ENCODE measurements at regions of chr2 and their contacts with region 1.

Region 1: GRCh38 chr2:219521066-219521880 is 7.0 kb downstream of the ASIC4 start:
- DNase-seq: no peak
- ATAC-seq: peak; percentile 35

Region 2: DNA sequence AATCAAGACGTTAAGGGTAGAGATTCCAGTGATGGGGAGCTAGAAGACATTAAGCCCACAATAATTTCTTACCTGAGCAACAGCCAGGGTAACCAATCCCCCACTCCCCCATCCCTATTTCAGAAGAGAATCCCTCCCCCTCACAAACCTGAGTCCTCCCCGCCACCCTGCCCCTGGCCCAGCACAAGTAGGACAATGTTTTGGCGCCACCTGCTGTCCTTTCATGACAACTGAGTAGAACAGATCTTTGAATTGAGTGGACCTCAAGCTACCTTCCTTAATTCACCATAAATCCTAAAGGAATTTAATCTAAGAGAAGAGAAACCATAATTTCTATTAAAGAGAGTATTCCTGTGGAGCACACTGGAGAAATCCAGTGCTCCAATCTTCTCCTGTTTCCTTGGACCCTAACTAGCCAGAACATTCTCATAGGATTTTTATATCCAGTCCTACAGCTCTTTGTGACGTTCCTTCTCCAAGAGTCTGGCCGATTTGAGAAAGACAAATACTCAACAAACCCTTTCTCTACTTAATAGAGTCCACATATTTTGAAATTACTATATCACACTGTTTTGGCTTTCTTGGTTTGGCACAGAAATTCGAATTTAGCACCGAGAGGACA is 401.7 kb before region 1 on chr2:
- intact Hi-C with region 1: no loop called
- DNase-seq: peak; percentile 74 to 88
- ATAC-seq: peak; percentile 16

Region 3: DNA sequence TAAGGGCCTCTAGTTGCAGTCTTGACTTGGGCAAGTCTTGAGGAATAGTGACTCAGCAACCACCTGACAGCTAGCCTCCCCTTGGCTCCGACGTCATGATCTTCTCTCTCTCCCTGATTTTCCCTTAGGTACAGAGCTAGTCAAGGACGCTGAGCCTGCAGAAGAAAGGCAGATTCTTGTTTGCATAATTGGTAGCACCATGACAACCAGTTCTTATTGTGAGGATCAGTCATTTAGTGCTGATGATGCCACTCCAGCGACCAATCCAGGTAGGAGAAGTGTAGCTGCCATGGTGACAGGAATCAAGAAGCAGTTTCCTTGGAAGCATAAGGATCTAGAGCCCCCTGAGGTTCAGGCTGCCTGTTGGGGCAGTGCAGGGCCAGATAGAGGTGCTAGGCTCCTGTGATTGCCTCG is 185.9 kb before region 1 on chr2:
- intact Hi-C with region 1: no loop called
- DNase-seq: no peak
- ATAC-seq: no peak

Region 4: DNA sequence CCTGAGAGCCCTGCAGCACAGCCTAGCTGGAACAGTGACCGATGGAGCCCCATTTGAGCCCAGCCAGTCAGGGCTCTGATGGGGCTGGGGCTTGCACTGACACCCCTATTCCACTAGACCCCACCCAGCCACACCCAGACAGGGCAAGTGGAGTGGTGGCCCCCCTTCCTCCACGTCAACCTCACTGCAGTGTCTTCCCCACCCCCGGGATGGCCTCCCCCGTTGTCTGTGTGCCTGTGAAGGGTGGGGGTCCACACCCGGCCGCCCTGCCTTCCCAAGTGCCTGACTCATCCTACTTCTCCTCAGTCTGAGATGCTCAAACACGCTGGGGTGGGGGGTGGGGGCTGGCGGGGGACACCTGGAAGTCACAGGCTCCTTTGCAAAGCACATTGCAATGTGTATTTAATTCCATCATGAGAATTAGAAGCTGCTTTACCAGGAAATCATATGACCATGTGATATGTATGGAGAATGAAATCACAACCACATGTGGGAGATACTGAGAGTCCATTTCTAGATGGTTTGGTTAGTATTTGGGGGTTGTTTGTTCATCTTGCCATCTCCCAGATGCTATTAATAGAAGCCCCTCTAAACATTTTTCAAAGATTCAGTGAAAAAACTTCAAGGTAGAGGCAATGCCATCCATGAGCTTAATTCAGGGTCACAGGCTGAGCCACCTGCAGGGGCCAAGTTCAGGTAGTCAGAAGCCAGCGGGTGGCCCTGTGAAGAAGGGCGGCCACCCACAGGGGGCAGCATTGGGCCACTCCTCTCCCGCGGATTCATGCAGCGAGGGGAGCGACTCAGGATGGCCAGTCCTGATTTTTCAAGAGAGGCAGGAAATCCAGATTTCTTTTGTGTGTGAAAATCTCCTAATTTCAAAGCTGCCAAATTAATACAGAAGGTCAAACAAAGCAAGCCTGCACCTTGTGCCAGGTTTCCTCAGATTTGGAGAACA is 45.3 kb before region 1 on chr2:
- intact Hi-C with region 1: loop called (anchors 10 kb)
- DNase-seq: peak in 1 of 2 donors; percentile 82
- ATAC-seq: peak; percentile 94

Measured in left colon (tissue), 2 donors.